OCI-LY7 (cell line): ENCODE measurements at regions of chr19 and their contacts with region 1.

Region 1: DNA sequence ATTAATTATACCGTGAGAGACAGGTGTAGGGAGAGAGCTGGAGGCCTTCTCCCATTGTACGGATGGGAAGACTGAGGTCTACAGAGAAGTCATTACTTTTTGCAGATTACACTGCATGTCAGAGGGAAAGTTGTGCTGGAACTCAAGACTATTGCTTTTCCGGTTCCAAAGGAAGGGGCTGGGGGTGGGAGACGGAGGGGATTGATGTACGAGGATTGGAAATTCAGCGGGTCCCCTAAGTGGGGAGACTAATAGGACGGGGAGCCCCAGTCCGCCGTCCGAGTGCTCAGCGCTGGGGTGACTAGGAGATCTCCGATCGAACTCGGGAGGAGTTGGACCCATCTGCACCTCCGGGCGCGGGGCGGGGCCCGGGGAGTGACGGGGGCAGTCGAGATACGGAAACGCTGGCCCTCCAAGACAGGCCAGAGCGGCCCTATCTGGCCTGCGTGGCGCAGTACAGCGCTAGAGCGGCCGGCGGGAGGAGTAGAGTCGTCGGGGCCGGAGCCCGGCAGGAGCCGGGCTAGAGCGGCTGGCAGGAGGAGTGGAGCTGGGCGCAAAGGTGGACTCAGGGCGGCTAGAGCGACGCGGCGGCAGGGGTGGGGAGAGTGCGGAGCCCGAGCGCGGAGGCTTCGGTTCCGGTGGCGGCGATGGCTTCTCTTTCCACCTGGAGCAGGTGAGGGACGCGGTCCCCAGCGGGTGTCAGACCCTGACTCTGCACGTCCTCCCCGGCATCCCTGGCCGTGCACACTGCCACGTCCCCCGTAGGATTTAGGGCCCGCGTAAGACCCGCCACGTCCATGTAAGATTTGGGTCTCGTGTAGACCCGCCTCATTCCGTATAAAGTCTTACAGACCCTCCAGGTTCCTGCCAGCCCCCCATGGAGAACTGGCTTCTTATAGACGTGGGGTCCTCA is 1.1 kb downstream of the ARHGEF1 start:
- DNase-seq: peak; percentile 98
- H3K4me3 ChIP-seq: peak overlapping the region; percentile 97
- H3K27ac ChIP-seq: peak overlapping the region; percentile 100
- H3K4me1 ChIP-seq: peaks cover 74% of the 10 kb centered on the region
- CTCF ChIP-seq: no peak

Region 2: DNA sequence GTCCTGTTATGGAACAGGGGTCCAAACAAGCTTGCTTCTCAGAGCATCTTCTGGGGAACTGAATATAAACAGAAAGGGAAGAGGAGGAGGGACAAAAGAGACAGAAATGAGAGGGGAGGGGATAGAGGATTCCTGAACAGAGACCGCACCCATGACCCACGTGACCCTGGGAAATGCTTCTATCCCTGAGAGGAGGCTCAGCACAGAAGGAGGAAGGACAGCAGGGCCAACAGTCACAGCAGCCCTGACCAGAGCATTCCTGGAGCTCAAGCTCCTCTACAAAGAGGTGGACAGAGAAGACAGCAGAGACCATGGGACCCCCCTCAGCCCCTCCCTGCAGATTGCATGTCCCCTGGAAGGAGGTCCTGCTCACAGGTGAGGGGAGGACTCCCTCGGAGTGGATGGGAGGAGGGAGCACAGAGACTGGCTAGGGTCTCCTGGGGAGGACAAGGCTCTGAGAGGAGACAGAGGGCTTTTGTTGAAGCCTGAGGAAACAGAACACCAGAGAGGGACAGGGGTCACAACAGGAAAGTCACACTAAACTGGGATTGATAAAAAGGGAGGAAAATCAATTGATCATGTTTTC is 128.7 kb before region 1 on chr19 and contains the start of gene CEACAM6:
- CTCF ChIA-PET with region 1: no interaction called
- POLR2A ChIA-PET with region 1: no interaction called
- intact Hi-C with region 1: no loop called
- DNase-seq: no peak
- H3K4me3 ChIP-seq: no peak within 1 kb of the TSS
- H3K27ac ChIP-seq: no peak within 1 kb of the TSS
- H3K4me1 ChIP-seq: peaks cover 16% of the 10 kb centered on the region
- CTCF ChIP-seq: no peak
- total RNA-seq, gene CEACAM6: not detected in 2 replicates

Region 3: GRCh38 chr19:41859618-41860418 is 24.3 kb before region 1 on chr19 and contains the start of gene RPS19:
- CTCF ChIA-PET with region 1: no interaction called
- POLR2A ChIA-PET with region 1: interaction called, 6 read pairs
- intact Hi-C with region 1: loop called (anchors 2 kb)
- DNase-seq: peak; percentile 98
- H3K4me3 ChIP-seq: peak within 1 kb of the TSS; percentile 96
- H3K27ac ChIP-seq: peak within 1 kb of the TSS; percentile 85
- H3K4me1 ChIP-seq: peaks cover 61% of the 10 kb centered on the region
- CTCF ChIP-seq: peak; percentile 54; the same call in 1 of the 2 replicates
- total RNA-seq, gene RPS19: 4,018 and 4,414 TPM in 2 replicates

Region 4: GRCh38 chr19:41872775-41873647 is 11.1 kb before region 1 on chr19:
- CTCF ChIA-PET with region 1: interaction called, 3 read pairs
- POLR2A ChIA-PET with region 1: interaction called, 18 read pairs
- intact Hi-C with region 1: loop called (anchors 1 kb)
- DNase-seq: peak; percentile 77
- H3K4me3 ChIP-seq: no peak overlapping the region
- H3K27ac ChIP-seq: peak overlapping the region; percentile 100
- H3K4me1 ChIP-seq: peaks cover 88% of the 10 kb centered on the region
- CTCF ChIP-seq: peak; percentile 94

Region 5: DNA sequence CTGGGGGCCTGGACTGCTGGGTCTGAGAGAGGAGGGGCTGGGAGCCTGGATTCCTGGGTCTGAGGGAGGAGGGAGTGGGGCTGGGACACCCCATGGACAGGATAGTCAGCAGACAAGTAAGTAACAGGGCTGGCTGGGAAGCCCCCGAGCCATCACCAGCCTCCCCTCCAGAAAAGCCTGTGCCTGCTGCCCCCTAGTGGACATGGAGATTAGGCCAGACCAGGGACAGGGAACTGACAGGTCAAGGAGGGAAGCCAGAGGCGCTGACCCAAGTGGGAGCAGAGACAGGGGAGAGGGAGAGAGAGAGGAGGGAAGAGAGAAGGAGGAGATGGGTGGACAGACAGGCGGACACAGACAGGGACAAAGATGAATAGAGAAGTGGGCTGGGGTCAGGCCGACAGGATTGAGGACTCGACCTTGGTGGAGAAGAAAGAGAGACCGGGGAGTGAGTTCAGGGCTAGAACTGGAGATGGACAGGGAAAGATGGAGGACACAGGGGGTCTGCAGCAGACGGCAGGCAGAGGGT is 50.8 kb after region 1 on chr19:
- CTCF ChIA-PET with region 1: interaction called, 4 read pairs
- POLR2A ChIA-PET with region 1: interaction called, 3 read pairs
- intact Hi-C with region 1: loop called (anchors 2 kb)
- DNase-seq: peak; percentile 85
- H3K4me3 ChIP-seq: no peak overlapping the region
- H3K27ac ChIP-seq: peak overlapping the region; percentile 62
- H3K4me1 ChIP-seq: peaks cover 87% of the 10 kb centered on the region
- CTCF ChIP-seq: peak; percentile 97

Region 6: GRCh38 chr19:41951686-41952172 is 67.7 kb after region 1 on chr19:
- CTCF ChIA-PET with region 1: no interaction called
- POLR2A ChIA-PET with region 1: interaction called, 3 read pairs
- intact Hi-C with region 1: loop called (anchors 2 kb)
- DNase-seq: peak; percentile 87
- H3K4me3 ChIP-seq: no peak overlapping the region
- H3K27ac ChIP-seq: no peak overlapping the region
- H3K4me1 ChIP-seq: peaks cover 52% of the 10 kb centered on the region
- CTCF ChIP-seq: peak; percentile 98

Region 7: DNA sequence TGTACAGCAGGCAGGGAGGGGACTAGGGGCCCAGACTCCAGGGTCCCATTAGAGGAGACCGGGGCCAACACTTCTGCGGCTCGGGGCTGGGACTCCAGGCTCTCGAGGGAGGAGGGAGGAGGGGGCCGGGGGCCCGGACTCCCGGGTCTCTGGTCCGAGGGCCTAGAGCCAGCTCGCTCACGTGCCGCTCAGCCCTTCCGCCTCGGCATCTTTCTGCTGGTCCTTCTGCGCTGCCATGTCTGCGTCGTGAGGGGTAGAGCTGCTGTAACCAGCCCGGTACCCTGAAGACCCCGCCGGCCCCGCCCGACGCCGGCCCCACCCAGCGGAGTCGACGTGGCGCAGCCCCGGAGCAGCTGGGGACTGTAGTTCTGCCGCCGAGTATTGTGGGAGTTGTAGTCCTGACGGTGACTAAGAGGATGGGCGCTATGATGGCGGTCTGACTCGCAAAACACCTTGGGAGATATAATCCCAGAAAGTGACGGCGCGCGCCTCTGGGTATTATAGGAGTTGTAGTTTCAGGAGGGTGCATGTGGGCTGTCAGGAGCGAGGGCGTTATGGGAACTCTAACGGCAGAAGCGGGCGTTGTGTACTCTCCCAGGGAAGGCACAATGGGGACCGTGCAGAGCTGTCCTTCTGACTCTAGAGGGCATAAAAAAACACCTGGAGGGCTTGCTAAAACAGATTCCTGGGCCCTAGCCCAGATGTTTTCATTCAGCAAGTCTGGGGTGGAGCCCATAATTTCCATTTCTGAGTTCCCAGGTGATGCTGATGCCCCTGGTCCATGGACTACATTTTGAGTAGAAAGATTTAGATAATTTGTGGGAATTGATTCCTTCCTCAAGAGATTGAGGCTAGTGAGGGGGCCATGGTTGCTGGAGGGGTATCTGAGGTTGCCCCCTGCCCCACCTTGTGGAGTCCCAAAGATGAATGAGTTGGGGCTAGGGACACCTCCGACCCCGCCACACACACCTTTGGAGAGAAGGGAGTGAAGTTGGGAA is 75.3 kb after region 1 on chr19 and contains the start of gene RABAC1:
- CTCF ChIA-PET with region 1: no interaction called
- POLR2A ChIA-PET with region 1: no interaction called
- intact Hi-C with region 1: loop called (anchors 1 kb)
- DNase-seq: peak; percentile 93
- H3K4me3 ChIP-seq: peak within 1 kb of the TSS; percentile 88
- H3K27ac ChIP-seq: peak within 1 kb of the TSS; percentile 65
- H3K4me1 ChIP-seq: peaks cover 19% of the 10 kb centered on the region
- CTCF ChIP-seq: peak; percentile 76
- total RNA-seq, gene RABAC1: 161 and 171 TPM in 2 replicates

Region 8: GRCh38 chr19:42207767-42208271 is 323.7 kb after region 1 on chr19:
- CTCF ChIA-PET with region 1: no interaction called
- POLR2A ChIA-PET with region 1: no interaction called
- intact Hi-C with region 1: no loop called
- DNase-seq: no peak
- H3K4me3 ChIP-seq: no peak overlapping the region
- H3K27ac ChIP-seq: no peak overlapping the region
- H3K4me1 ChIP-seq: peaks cover 7% of the 10 kb centered on the region
- CTCF ChIP-seq: no peak